HEK293 (cell line): ENCODE measurements at regions of chr1 and their contacts with region 1.

Region 1: GRCh38 chr1:28877132-28877781 is 37.1 kb upstream of the EPB41 start:
- H3K4me3 ChIP-seq: no peak overlapping the region
- H3K27ac ChIP-seq: no peak overlapping the region
- H3K4me1 ChIP-seq: no peaks in the 10 kb centered on the region
- CTCF ChIP-seq: peak; percentile 89

Region 2: DNA sequence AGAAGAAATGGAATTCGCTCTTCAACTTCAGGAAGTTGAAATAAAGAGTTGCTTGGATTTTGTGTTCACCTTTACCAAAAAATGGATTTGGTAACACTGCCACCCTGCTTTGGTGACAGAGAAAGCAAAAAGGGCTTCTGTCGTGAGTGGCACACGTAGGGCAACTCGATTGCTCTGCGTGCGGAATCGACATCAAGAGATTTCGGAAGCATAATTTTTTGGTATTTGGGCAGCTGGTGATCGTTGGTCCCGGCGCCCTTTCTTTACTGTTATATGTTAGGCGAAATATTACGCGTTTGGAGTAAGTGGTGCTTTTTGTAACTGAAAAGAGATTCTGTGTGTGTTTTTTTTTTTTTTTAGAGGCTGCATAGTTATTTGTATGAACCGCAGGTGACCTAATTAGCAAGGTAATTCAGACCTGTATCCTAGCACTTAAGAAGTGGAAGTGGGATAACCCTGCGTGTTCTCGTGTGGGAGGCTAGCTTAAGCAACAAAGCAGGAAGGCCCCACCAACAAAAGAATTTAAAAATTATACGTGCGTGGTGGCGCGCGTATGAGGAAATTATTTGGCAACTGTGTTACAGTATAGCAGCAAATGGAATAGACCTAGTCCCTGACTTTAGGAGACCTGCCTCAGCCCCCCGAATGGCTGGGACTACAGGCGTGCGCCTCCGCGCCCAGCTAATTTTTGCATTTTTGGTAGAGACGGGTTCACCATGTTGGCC is 228.6 kb before region 1 on chr1 and contains the start of gene RNU11:
- CTCF ChIA-PET with region 1: interaction called, 10 read pairs
- POLR2A ChIA-PET with region 1: interaction called, 23 read pairs
- H3K4me3 ChIP-seq: peak within 1 kb of the TSS; percentile 40
- H3K27ac ChIP-seq: peak within 1 kb of the TSS; percentile 95
- H3K4me1 ChIP-seq: no peaks in the 10 kb centered on the region
- CTCF ChIP-seq: peak; percentile 28; the same call in 1 of the 2 replicates

Region 3: DNA sequence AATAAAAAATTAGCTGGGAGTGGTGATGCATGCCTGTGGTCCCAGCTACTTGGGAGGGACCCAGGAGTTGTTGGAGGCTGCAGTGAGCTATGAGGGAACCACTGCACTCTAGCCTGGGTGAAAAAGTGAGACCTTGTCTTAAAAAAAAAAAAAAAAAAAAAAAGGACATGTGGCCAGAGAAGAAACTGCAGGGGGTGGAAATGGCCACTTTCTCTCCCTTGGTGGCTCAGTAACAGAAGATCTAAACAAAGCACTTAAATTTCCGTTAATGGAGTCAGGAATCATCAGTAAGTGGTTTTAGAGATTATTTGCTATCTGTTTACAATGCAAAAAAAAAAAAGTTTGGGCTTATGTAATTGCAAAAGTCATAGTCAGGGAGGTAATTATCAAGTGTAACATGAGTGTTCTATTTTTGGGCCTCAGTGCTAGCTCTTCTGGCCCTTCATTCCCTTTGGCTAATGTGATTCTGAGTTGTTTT is 84.6 kb before region 1 on chr1:
- CTCF ChIA-PET with region 1: interaction called, 167 read pairs
- POLR2A ChIA-PET with region 1: no interaction called
- H3K4me3 ChIP-seq: no peak overlapping the region
- H3K27ac ChIP-seq: no peak overlapping the region
- H3K4me1 ChIP-seq: no peaks in the 10 kb centered on the region
- CTCF ChIP-seq: no peak

Region 4: DNA sequence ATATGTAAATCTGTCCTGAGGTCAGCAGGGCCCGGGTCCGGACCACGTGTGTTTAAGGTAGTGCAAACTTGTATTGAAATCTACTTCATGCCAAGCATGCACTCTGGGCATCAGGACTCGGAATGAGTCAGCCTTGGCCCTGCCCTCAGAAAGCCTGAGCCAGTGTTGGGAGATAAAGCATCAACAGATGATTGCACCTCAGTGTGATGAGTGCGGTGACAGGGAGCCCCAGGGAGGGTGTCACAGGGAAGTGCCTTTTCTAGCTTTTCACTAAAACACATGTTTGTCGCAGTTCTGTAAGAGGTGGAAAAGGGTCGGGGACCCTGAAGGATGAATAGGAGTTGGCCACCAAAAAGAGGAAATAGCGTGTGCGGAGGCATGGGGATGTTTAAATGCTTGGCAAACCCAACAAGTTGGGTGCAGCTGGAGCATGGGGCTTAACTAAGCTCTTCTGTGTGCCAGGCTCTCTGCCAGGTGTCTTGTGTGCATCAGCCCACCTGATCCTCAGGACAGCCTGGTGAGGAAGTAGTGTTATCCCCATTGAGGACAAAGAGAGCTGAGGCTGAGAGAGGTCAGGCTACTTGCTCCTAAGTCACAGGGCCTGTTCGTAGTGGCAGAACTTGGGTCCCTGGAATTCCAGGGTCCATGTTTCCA is 11.1 kb before region 1 on chr1:
- CTCF ChIA-PET with region 1: interaction called, 39 read pairs
- POLR2A ChIA-PET with region 1: no interaction called
- H3K4me3 ChIP-seq: no peak overlapping the region
- H3K27ac ChIP-seq: no peak overlapping the region
- H3K4me1 ChIP-seq: no peaks in the 10 kb centered on the region; the same call in 1 of the 2 replicates
- CTCF ChIP-seq: no peak